Naive thymus-derived CD4-positive, alpha-beta T cell (primary cell): ENCODE measurements at regions of chr6 and their contacts with region 1.

Region 1: DNA sequence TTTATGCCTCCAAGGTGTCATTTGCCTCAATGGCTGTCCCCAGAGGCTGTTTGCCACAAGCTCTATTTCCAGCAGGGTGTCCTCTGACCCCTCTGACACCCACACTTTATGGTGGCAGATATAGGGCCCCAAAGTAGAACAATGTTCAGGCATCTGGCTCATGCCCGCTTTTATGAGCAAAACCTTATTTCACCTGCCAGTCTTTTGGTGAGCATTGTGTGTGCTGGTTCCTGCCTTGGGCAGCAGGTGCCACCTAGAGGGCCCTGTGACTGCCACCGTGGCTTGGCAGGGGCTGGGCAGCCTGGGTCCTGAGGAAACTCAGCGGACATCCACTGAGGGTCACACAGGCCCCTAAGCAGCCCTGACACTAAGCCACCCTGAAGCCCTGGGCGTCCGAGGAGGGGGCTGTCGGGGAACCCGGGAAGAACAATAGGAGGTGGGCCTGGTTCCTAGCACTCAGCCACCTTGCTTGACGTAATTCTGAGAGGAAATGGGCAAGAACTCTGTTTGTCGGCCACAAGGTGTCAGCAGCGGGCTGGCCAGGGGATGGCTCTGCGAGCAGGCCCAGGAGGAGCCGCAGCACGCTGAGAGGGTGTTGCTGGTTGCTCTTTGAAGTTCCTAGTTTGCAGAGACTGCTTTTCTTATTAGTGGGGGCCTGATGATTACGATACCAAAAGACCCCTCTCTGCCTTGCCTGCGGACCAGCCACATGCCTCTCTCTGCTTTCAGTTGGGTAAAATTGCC is 148.9 kb downstream of the SCML4 start:
- DNase-seq: peak; percentile 77 to 90 (median 86)
- ATAC-seq: peak; percentile 97
- H3K4me3 ChIP-seq: peak overlapping the region; percentile 36
- H3K4me3 Mint-ChIP-seq: peak overlapping the region in 8 of 10 donors; percentile 49 to 83 (median 76)
- H3K27ac ChIP-seq: peak overlapping the region; percentile 71
- H3K27ac Mint-ChIP-seq: peak overlapping the region; percentile 74 to 96 (median 85)
- H3K4me1 ChIP-seq: peaks cover 0 to 10% of the 10 kb centered on the region in 2 donors
- H3K4me1 Mint-ChIP-seq: peaks cover 0 to 17% (median 9%) of the 10 kb centered on the region in 7 donors
- H3K27me3 ChIP-seq: no peaks in the 10 kb centered on the region
- H3K27me3 Mint-ChIP-seq: peaks cover 0 to 15% (median 0%) of the 10 kb centered on the region in 5 donors

Region 2: GRCh38 chr6:107318100-107318736 is 356.9 kb before region 1 on chr6:
- CTCF ChIA-PET with region 1: no interaction called
- POLR2A ChIA-PET with region 1: no interaction called
- intact Hi-C with region 1: loop called (anchors 1 to 2 kb)
- DNase-seq: peak in 1 of 9 donors; percentile 2
- ATAC-seq: peak; percentile 71
- H3K4me3 ChIP-seq: no peak overlapping the region
- H3K4me3 Mint-ChIP-seq: no peak overlapping the region
- H3K27ac ChIP-seq: no peak overlapping the region
- H3K27ac Mint-ChIP-seq: no peak overlapping the region
- H3K4me1 ChIP-seq: no peaks in the 10 kb centered on the region
- H3K4me1 Mint-ChIP-seq: peaks cover 0 to 8% (median 5%) of the 10 kb centered on the region in 7 donors
- H3K27me3 ChIP-seq: no peaks in the 10 kb centered on the region
- H3K27me3 Mint-ChIP-seq: no peaks in the 10 kb centered on the region

Region 3: DNA sequence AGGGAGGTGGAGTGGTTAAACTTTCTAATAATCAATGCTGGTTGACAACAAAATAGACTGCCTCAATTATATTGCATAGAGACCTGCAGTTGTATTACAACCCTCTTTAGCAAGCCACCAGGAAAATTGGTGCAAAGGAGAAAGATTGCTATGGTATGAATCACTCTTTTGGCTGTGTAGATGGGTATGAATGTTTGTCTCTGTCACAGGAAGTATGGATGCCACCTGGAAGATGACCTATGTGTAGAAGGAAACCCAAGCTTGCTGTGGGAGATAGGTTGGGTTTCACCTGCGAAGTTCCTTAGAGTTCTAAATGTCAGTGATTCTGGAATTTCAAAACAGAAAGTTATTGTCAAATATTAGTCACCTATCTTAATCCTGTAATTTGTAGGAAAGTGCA is 50.6 kb before region 1 on chr6:
- CTCF ChIA-PET with region 1: no interaction called
- POLR2A ChIA-PET with region 1: no interaction called
- intact Hi-C with region 1: no loop called
- DNase-seq: no peak
- ATAC-seq: no peak
- H3K4me3 ChIP-seq: no peak overlapping the region
- H3K4me3 Mint-ChIP-seq: no peak overlapping the region
- H3K27ac ChIP-seq: no peak overlapping the region
- H3K27ac Mint-ChIP-seq: no peak overlapping the region
- H3K4me1 ChIP-seq: peaks cover 0 to 2% of the 10 kb centered on the region in 2 donors
- H3K4me1 Mint-ChIP-seq: peaks cover 5 to 22% (median 17%) of the 10 kb centered on the region in 7 donors
- H3K27me3 ChIP-seq: no peaks in the 10 kb centered on the region
- H3K27me3 Mint-ChIP-seq: peaks cover 0 to 38% (median 0%) of the 10 kb centered on the region in 5 donors

Region 4: DNA sequence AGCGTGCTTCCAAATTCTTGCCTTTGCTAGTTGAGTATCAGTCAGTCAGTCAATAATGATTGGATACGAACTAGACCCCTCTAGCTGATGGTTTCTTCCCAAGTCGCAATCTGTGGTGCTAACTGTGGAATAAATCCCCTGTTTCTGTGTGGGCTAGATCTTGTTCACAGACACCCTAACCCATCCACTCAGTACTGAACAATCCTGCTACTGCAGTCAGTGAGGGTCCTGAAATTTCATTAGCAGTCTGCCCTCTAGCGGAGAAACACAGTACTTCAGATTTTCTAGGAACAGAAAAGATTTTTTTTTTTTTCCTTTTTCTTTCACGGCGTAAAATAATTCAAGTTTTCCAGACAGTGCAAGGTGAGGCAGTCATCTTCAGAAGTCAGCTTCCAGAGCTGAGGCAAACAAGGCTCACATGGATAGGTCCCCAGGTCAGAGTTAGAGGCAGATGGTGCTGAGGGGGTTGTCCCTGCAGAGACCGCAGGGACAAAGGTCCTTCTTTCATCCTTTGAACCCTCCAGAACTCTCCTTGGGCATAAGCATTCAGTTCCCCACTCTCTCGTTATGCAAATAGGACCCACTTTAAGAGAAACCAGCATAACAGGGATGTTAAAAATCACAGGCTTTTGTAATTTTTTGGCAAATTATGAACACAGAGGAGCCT is 29.3 kb after region 1 on chr6:
- CTCF ChIA-PET with region 1: interaction called, 3 read pairs
- POLR2A ChIA-PET with region 1: no interaction called
- intact Hi-C with region 1: loop called (anchors 1 kb)
- DNase-seq: peak in 3 of 9 donors; percentile 21 to 39 (median 34)
- ATAC-seq: peak; percentile 44
- H3K4me3 ChIP-seq: no peak overlapping the region
- H3K4me3 Mint-ChIP-seq: no peak overlapping the region
- H3K27ac ChIP-seq: peak overlapping the region; percentile 34
- H3K27ac Mint-ChIP-seq: peak overlapping the region in 8 of 9 donors; percentile 52 to 89 (median 74)
- H3K4me1 ChIP-seq: peaks cover 0 to 11% of the 10 kb centered on the region in 2 donors
- H3K4me1 Mint-ChIP-seq: peaks cover 11 to 71% (median 46%) of the 10 kb centered on the region in 7 donors
- H3K27me3 ChIP-seq: no peaks in the 10 kb centered on the region
- H3K27me3 Mint-ChIP-seq: peaks cover 0 to 3% (median 0%) of the 10 kb centered on the region in 5 donors

Region 5: GRCh38 chr6:107847844-107848802 is 173.0 kb after region 1 on chr6:
- CTCF ChIA-PET with region 1: interaction called, 29 read pairs
- POLR2A ChIA-PET with region 1: no interaction called
- intact Hi-C with region 1: loop called (anchors 1 kb)
- DNase-seq: peak; percentile 66 to 88 (median 77)
- ATAC-seq: peak; percentile 92
- H3K4me3 ChIP-seq: peak overlapping the region; percentile 76
- H3K4me3 Mint-ChIP-seq: peak overlapping the region; percentile 73 to 91 (median 86)
- H3K27ac ChIP-seq: peak overlapping the region; percentile 67
- H3K27ac Mint-ChIP-seq: peak overlapping the region; percentile 68 to 95 (median 85)
- H3K4me1 ChIP-seq: peaks cover 0 to 21% of the 10 kb centered on the region in 2 donors
- H3K4me1 Mint-ChIP-seq: peaks cover 10 to 49% (median 26%) of the 10 kb centered on the region in 7 donors
- H3K27me3 ChIP-seq: no peaks in the 10 kb centered on the region
- H3K27me3 Mint-ChIP-seq: peaks cover 0 to 7% (median 0%) of the 10 kb centered on the region in 5 donors

Region 6: GRCh38 chr6:108492131-108492766 is 817.1 kb after region 1 on chr6:
- CTCF ChIA-PET with region 1: interaction called, 3 read pairs
- POLR2A ChIA-PET with region 1: no interaction called
- intact Hi-C with region 1: loop called in 1 of 2 experiments (anchors 1 kb)
- DNase-seq: peak in 3 of 9 donors; percentile 16 to 18 (median 18)
- ATAC-seq: peak; percentile 38
- H3K4me3 ChIP-seq: no peak overlapping the region
- H3K4me3 Mint-ChIP-seq: no peak overlapping the region
- H3K27ac ChIP-seq: no peak overlapping the region
- H3K27ac Mint-ChIP-seq: no peak overlapping the region
- H3K4me1 ChIP-seq: no peaks in the 10 kb centered on the region
- H3K4me1 Mint-ChIP-seq: no peaks in the 10 kb centered on the region
- H3K27me3 ChIP-seq: no peaks in the 10 kb centered on the region
- H3K27me3 Mint-ChIP-seq: peaks cover 0 to 11% (median 0%) of the 10 kb centered on the region in 5 donors